Heart left ventricle (tissue), 16 donors: ENCODE measurements at regions of chr20 and their contacts with region 1.

Region 1: GRCh38 chr20:3106658-3107463 is 22.3 kb upstream of the AVP start:
- DNase-seq: peak in 1 of 5 donors; percentile 37
- ATAC-seq: no peak
- H3K4me3 ChIP-seq: no peak overlapping the region
- H3K27ac ChIP-seq: no peak overlapping the region
- H3K4me1 ChIP-seq: no peaks in the 10 kb centered on the region
- H3K27me3 ChIP-seq: no peaks in the 10 kb centered on the region
- CTCF ChIP-seq: no peak
- POLR2A ChIP-seq: no peak

Region 2: DNA sequence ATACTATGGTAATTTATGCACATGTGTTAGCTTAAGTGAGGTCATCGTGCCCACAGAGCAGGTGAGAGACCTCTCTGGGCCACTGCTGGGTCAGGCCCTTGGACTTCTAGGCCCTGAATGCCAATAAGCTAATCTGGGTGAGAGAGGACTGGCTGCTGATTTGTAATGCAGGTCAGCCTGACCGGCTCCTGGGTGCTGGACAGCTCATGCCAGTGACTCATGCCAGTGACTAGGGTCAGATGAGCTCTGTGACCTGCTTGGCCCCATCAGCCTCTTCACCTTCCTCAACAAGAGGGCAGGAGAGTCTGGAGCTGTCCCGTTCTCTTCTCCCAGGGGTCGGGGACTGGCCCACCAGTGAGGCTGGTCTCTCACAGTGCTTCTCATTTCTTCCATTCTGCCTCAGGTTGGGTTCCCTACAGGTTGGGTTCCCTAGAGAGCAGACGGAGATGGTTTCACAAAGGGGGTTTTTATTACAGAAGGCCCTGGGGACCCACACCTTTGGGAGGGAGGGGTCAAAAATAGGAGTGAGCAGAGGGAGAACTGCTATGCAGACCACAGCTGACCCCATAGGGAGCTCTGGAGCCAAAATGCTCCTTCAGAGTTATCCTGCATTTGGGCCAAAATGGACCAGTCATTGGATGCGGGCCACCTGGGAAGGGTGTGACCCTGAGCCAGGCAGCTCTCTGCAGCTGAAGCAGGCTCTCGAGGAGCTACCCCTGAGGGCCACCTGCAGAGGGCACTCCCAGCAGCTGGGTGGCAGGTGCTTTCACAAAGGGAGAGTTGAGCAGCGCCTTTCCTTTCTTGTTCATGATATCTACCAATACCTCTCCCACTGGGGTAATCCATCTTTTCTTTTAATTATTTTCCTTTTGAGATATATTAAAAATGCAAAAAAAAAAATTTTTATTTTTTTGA is 37.6 kb before region 1 on chr20:
- intact Hi-C with region 1: loop called in 2 of 10 experiments (anchors 5 kb)
- DNase-seq: no peak
- ATAC-seq: peak in 3 of 4 donors; percentile 15 to 47 (median 25)
- H3K4me3 ChIP-seq: no peak overlapping the region
- H3K27ac ChIP-seq: no peak overlapping the region
- H3K4me1 ChIP-seq: peaks cover 0 to 13% (median 5%) of the 10 kb centered on the region in 12 donors
- H3K27me3 ChIP-seq: peaks cover 0 to 25% (median 15%) of the 10 kb centered on the region in 9 donors
- CTCF ChIP-seq: peak in 4 of 12 donors; percentile 12 to 27 (median 17)
- POLR2A ChIP-seq: no peak

Region 3: GRCh38 chr20:4064144-4064909 is 957.5 kb after region 1 on chr20:
- intact Hi-C with region 1: no loop called
- DNase-seq: peak; percentile 94 to 96 (median 95)
- ATAC-seq: peak; percentile 86 to 94 (median 91)
- H3K4me3 ChIP-seq: peak overlapping the region in 1 of 12 donors; percentile 21
- H3K27ac ChIP-seq: peak overlapping the region; percentile 62 to 95 (median 80)
- H3K4me1 ChIP-seq: peaks cover 10 to 86% (median 45%) of the 10 kb centered on the region in 12 donors
- H3K27me3 ChIP-seq: no peaks in the 10 kb centered on the region
- CTCF ChIP-seq: peak in 1 of 12 donors; percentile 19
- POLR2A ChIP-seq: no peak